Activated CD4-positive, alpha-beta memory T cell treated with anti-CD3 and anti-CD28 coated beads for 36 hours (primary cell): ENCODE measurements at regions of chr17 and their contacts with region 1.

Region 1: GRCh38 chr17:64496786-64497564 is at the start of gene POLG2:
- DNase-seq: peak; percentile 97
- H3K4me3 Mint-ChIP-seq: peak within 1 kb of the TSS; percentile 96
- H3K27ac Mint-ChIP-seq: peak within 1 kb of the TSS; percentile 93
- H3K4me1 Mint-ChIP-seq: peaks cover 74% of the 10 kb centered on the region
- H3K27me3 Mint-ChIP-seq: no peaks in the 10 kb centered on the region
- total RNA-seq, gene POLG2: 25.8 to 28.1 TPM

Region 2: DNA sequence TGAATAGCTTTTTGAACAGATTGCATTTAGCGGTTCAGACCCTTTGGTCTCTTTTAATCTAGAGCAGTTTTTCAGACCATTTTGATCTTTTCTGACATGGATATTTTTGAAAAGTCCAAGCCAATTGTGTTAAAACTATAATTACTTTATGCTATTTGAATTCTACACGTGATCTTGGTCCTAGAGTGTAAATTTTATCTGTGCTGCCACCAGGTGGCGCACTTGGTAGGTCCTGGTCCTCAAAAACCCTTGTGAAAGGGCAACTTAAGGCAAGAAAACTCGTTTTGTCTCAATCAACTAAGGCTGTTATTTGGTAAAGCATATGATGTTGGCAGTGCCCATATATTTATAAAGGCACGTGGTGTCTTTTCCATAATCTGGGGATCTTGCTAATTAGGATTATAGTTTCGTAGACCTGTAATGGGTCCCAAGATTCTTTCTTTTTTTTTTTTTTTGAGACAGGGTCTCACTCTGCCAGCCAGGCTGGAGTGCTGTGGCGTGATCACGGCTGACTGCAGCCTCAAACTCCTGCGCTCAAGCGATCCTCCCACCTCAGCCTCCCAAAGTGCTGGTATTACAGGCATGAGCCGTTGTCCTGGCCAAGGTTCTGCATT is 190.0 kb before region 1 on chr17:
- CTCF ChIA-PET with region 1: no interaction called
- POLR2A ChIA-PET with region 1: no interaction called
- intact Hi-C with region 1: loop called (anchors 10 kb)
- DNase-seq: peak; percentile 75
- H3K4me3 Mint-ChIP-seq: no peak overlapping the region
- H3K27ac Mint-ChIP-seq: no peak overlapping the region
- H3K4me1 Mint-ChIP-seq: peaks cover 3% of the 10 kb centered on the region
- H3K27me3 Mint-ChIP-seq: no peaks in the 10 kb centered on the region